CD8-positive, alpha-beta T cell (primary cell): ENCODE measurements at regions of chr9 and their contacts with region 1.

Region 1: DNA sequence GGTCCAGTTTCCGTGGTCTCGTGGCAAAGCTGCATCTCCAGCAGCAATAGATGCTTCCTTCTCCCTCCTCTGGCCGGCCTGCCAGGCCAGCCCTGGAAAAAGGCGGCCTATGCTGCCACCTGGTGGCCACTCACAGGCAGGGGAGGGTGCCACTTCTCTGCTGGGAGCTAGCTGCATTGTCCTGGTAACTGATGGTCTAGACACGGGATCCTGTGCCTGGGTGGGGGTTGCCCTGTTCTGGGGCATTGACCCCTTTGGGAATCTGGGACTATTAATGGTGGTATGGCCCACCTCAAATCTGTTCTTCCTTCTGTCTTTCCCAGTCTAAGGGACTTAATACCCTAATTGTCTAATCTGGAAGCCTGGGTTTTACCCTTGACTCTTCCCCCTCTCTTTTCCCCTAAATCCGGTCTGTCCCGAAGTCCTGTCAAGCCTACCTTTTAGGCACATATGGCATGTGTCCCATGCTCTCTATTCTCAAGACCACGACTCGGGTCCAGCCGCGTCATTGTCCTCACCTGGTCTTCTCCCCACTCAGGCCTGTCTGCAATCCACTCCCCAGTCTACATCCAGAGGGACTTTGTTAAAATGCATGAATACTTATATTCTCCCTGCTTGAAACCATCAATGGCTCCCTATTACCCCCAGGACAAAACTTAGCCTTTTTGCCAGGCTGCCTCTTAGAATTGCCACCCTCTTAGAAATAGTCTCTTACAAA is 20.0 kb upstream of the PTGS1 start:
- DNase-seq: peak; percentile 58 to 89 (median 76)
- ATAC-seq: peak; percentile 82
- H3K4me3 ChIP-seq: no peak overlapping the region
- H3K4me3 Mint-ChIP-seq: no peak overlapping the region
- H3K27ac ChIP-seq: no peak overlapping the region
- H3K27ac Mint-ChIP-seq: no peak overlapping the region
- H3K4me1 ChIP-seq: peaks cover 21% of the 10 kb centered on the region
- H3K4me1 Mint-ChIP-seq: peaks cover 27% of the 10 kb centered on the region
- H3K27me3 ChIP-seq: peaks cover 0 to 5% of the 10 kb centered on the region in 2 experiments
- H3K27me3 Mint-ChIP-seq: peaks cover 21% of the 10 kb centered on the region
- CTCF ChIP-seq: peak; percentile 97

Region 2: GRCh38 chr9:121545875-121546423 is 804.8 kb before region 1 on chr9:
- CTCF ChIA-PET with region 1: no interaction called
- POLR2A ChIA-PET with region 1: no interaction called
- intact Hi-C with region 1: loop called in 1 of 2 experiments (anchors 5 kb)
- DNase-seq: peak; percentile 28 to 72 (median 62)
- ATAC-seq: peak; percentile 59
- H3K4me3 ChIP-seq: no peak overlapping the region
- H3K4me3 Mint-ChIP-seq: no peak overlapping the region
- H3K27ac ChIP-seq: no peak overlapping the region
- H3K27ac Mint-ChIP-seq: no peak overlapping the region
- H3K4me1 ChIP-seq: peaks cover 14% of the 10 kb centered on the region
- H3K4me1 Mint-ChIP-seq: peaks cover 2% of the 10 kb centered on the region
- H3K27me3 ChIP-seq: peaks cover 4 to 7% of the 10 kb centered on the region in 2 experiments
- H3K27me3 Mint-ChIP-seq: peaks cover 33% of the 10 kb centered on the region
- CTCF ChIP-seq: peak; percentile 57

Region 3: GRCh38 chr9:122125158-122125508 is 225.7 kb before region 1 on chr9:
- CTCF ChIA-PET with region 1: interaction called, 316 read pairs
- POLR2A ChIA-PET with region 1: interaction called, 4 read pairs
- intact Hi-C with region 1: loop called (anchors 1 kb)
- DNase-seq: peak; percentile 62 to 87 (median 76)
- ATAC-seq: peak; percentile 83
- H3K4me3 ChIP-seq: no peak overlapping the region
- H3K4me3 Mint-ChIP-seq: peak overlapping the region; percentile 33
- H3K27ac ChIP-seq: no peak overlapping the region
- H3K27ac Mint-ChIP-seq: no peak overlapping the region
- H3K4me1 ChIP-seq: peaks cover 18% of the 10 kb centered on the region
- H3K4me1 Mint-ChIP-seq: peaks cover 21% of the 10 kb centered on the region
- H3K27me3 ChIP-seq: peaks cover 12 to 16% of the 10 kb centered on the region in 2 experiments
- H3K27me3 Mint-ChIP-seq: peaks cover 31% of the 10 kb centered on the region
- CTCF ChIP-seq: peak; percentile 82

Region 4: GRCh38 chr9:122131401-122132001 is 219.3 kb before region 1 on chr9:
- CTCF ChIA-PET with region 1: interaction called, 316 read pairs
- POLR2A ChIA-PET with region 1: no interaction called
- intact Hi-C with region 1: no loop called
- DNase-seq: no peak
- ATAC-seq: no peak
- H3K4me3 ChIP-seq: no peak overlapping the region
- H3K4me3 Mint-ChIP-seq: no peak overlapping the region
- H3K27ac ChIP-seq: no peak overlapping the region
- H3K27ac Mint-ChIP-seq: no peak overlapping the region
- H3K4me1 ChIP-seq: peaks cover 3% of the 10 kb centered on the region
- H3K4me1 Mint-ChIP-seq: peaks cover 6% of the 10 kb centered on the region
- H3K27me3 ChIP-seq: peaks cover 0 to 5% of the 10 kb centered on the region in 2 experiments
- H3K27me3 Mint-ChIP-seq: peaks cover 12% of the 10 kb centered on the region
- CTCF ChIP-seq: no peak

Region 5: GRCh38 chr9:122338994-122339393 is 11.8 kb before region 1 on chr9:
- CTCF ChIA-PET with region 1: interaction called, 22 read pairs
- POLR2A ChIA-PET with region 1: no interaction called
- intact Hi-C with region 1: no loop called
- DNase-seq: no peak
- ATAC-seq: no peak
- H3K4me3 ChIP-seq: no peak overlapping the region
- H3K4me3 Mint-ChIP-seq: no peak overlapping the region
- H3K27ac ChIP-seq: no peak overlapping the region
- H3K27ac Mint-ChIP-seq: no peak overlapping the region
- H3K4me1 ChIP-seq: no peaks in the 10 kb centered on the region
- H3K4me1 Mint-ChIP-seq: no peaks in the 10 kb centered on the region
- H3K27me3 ChIP-seq: no peaks in the 10 kb centered on the region
- H3K27me3 Mint-ChIP-seq: peaks cover 2% of the 10 kb centered on the region
- CTCF ChIP-seq: no peak

Region 6: DNA sequence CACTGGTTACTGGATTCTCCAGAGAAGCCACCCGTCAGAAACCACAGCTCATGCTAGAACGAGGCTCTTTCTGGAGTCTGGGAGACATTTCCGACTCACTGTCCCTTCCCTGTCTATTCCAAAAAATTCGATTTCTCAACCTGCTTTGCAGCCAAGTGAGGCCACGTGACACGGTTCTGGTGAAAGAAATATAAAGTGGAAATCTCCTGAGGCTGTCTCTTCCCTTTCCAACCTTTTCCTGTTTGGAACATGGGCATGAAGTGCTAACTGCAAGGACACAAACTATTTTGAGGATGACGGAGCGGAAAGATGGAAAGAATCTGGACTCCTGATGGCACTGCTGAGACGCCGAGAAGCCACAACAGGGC is 14.0 kb after region 1 on chr9:
- CTCF ChIA-PET with region 1: interaction called, 17 read pairs
- POLR2A ChIA-PET with region 1: no interaction called
- intact Hi-C with region 1: no loop called
- DNase-seq: no peak
- ATAC-seq: no peak
- H3K4me3 ChIP-seq: no peak overlapping the region
- H3K4me3 Mint-ChIP-seq: no peak overlapping the region
- H3K27ac ChIP-seq: no peak overlapping the region
- H3K27ac Mint-ChIP-seq: no peak overlapping the region
- H3K4me1 ChIP-seq: no peaks in the 10 kb centered on the region
- H3K4me1 Mint-ChIP-seq: no peaks in the 10 kb centered on the region
- H3K27me3 ChIP-seq: no peaks in the 10 kb centered on the region
- H3K27me3 Mint-ChIP-seq: peaks cover 3% of the 10 kb centered on the region
- CTCF ChIP-seq: no peak

Region 7: DNA sequence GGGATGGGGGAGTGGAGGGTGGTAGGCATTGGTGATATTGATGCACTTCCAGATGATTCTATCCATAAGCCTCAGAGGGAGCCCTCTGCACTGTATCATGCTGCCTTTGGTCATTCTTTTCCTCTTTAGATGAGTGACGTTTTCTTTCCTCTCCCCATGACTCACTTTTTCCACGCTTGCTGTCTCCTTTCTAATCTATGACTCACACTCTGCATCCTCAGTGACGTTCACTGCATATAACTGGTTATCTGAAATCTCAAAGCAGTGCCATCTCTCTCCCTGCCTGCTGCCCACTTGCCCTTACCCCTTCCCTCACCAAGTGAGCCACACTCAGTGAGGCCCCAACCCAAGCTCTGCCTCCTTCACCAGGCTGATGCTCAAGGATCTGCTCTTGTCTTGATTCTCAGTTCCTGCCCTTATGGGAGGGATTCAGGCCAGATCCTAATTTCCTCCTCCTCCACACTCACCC is 51.6 kb after region 1 on chr9:
- CTCF ChIA-PET with region 1: no interaction called
- POLR2A ChIA-PET with region 1: no interaction called
- intact Hi-C with region 1: no loop called
- DNase-seq: no peak
- ATAC-seq: no peak
- H3K4me3 ChIP-seq: no peak overlapping the region
- H3K4me3 Mint-ChIP-seq: no peak overlapping the region
- H3K27ac ChIP-seq: no peak overlapping the region
- H3K27ac Mint-ChIP-seq: no peak overlapping the region
- H3K4me1 ChIP-seq: no peaks in the 10 kb centered on the region
- H3K4me1 Mint-ChIP-seq: no peaks in the 10 kb centered on the region
- H3K27me3 ChIP-seq: no peaks in the 10 kb centered on the region
- H3K27me3 Mint-ChIP-seq: peaks cover 3% of the 10 kb centered on the region
- CTCF ChIP-seq: no peak

Region 8: DNA sequence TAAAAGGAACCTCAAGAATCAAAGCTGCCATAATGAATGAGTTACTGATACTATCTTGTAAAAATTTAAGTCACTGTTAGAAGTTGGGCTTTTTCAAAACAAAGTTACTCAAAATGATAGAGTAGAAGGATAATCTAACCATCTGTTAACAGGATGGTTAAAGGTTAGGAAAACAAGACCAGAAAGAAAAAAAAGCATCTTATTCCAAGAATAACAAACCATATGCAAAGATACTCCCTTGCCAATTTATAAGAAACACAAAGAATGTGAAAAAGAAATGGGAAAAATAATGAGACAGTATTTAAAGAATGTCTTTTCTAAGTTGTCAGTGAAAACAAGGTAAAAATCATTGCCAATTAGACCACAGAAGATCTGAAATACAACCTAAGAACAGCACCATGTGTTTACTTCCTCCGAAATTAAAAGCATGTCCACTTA is 866.4 kb after region 1 on chr9:
- CTCF ChIA-PET with region 1: no interaction called
- POLR2A ChIA-PET with region 1: no interaction called
- intact Hi-C with region 1: no loop called
- DNase-seq: no peak
- ATAC-seq: no peak
- H3K4me3 ChIP-seq: no peak overlapping the region
- H3K4me3 Mint-ChIP-seq: no peak overlapping the region
- H3K27ac ChIP-seq: no peak overlapping the region
- H3K27ac Mint-ChIP-seq: no peak overlapping the region
- H3K4me1 ChIP-seq: no peaks in the 10 kb centered on the region
- H3K4me1 Mint-ChIP-seq: peaks cover 20% of the 10 kb centered on the region
- H3K27me3 ChIP-seq: no peaks in the 10 kb centered on the region
- H3K27me3 Mint-ChIP-seq: no peaks in the 10 kb centered on the region
- CTCF ChIP-seq: no peak